ENCODE measurements at regions of chr9 and their contacts with region 1.

Region 1: DNA sequence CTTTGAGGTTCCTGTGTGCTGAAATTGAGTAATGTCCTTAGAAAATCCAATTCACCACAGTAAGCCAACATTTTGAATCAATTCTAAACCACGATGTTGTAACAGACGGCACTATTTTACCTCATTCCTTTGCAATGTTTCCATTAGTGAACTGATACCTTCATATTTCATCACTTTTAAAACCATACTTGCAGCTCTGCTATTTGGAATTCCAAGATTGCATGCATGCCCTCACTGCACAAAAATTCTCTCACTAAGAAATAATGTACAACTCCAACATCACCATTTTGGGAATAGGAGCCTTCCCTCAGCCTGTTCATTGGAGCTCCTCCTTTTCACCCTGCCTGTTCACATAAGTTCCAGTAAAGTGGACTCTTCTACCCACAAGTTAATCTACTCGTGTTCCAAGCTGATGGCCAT is 74.8 kb upstream of the TGFBR1 start:
- DNase-seq: no peak
- ATAC-seq: peak in 2 of 8 donors; percentile 20 to 49
- H3K4me3 ChIP-seq: no peak overlapping the region
- H3K27ac ChIP-seq: peak overlapping the region in 1 of 10 donors; percentile 58
- H3K4me1 ChIP-seq: peaks cover 0 to 10% (median 0%) of the 10 kb centered on the region in 9 donors
- H3K27me3 ChIP-seq: peaks cover 0 to 14% (median 0%) of the 10 kb centered on the region in 7 donors
- CTCF ChIP-seq: no peak

Region 2: GRCh38 chr9:99092643-99093491 is 62.8 kb after region 1 on chr9:
- intact Hi-C with region 1: loop called in 1 of 10 experiments (anchors 10 kb)
- DNase-seq: no peak
- ATAC-seq: no peak
- H3K4me3 ChIP-seq: no peak overlapping the region
- H3K27ac ChIP-seq: no peak overlapping the region
- H3K4me1 ChIP-seq: peaks cover 0 to 10% (median 4%) of the 10 kb centered on the region in 9 donors
- H3K27me3 ChIP-seq: peaks cover 0 to 3% (median 0%) of the 10 kb centered on the region in 7 donors
- CTCF ChIP-seq: no peak

Region 3: DNA sequence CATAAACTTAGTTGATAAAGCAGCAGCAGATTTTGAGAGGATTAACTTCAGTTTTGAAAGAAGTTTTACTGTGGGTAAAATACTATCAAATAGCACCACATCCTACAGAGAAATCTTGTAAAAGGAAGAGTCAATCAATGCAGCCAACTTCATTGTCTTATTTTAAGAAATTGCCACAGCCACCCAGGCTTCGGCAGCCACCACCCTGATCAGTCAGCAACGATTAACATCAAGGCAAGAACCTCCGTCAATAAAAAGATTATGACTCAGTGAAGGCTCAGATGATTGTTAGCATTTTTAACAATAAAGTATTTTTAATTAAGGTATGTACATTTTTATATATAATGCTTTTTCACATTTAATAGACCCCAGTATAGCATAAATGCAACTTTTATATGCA is 669.3 kb after region 1 on chr9:
- intact Hi-C with region 1: no loop called
- DNase-seq: no peak
- ATAC-seq: no peak
- H3K4me3 ChIP-seq: no peak overlapping the region
- H3K27ac ChIP-seq: no peak overlapping the region
- H3K4me1 ChIP-seq: peaks cover 0 to 3% (median 0%) of the 10 kb centered on the region in 9 donors
- H3K27me3 ChIP-seq: no peaks in the 10 kb centered on the region
- CTCF ChIP-seq: no peak